Left lung (tissue), 14 donors: ENCODE measurements at regions of chr2 and their contacts with region 1.

Region 1: DNA sequence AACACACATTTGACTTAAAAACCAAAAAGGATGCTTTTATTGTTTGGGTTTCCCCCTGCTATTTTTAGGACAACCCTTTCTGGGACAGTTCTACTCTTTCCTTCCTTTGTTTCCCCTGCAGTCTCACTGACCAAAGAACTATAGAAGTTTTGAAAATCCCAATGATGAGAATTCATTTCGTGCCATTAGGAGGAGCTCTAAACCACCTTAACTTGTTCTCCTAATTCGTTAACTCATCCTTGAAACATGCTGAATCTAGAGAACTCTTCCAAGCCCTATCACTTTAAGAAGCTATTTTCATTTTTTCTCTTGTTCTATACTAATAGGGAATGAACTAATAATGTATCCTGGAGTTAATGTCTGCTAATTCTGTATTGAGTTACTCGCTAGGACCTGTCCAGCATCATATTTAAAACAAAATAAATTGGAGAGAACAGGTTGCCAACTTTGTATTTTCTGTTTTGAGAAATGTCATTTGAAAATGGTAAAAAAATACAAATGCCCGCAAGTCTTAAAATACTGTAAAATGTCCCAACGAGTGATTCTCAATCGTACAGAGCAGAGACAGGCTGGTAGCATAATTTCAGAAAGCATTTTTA is 62.9 kb downstream of the AFTPH start:
- DNase-seq: peak in 1 of 4 donors; percentile 45
- ATAC-seq: peak; percentile 87
- H3K4me3 ChIP-seq: no peak overlapping the region
- H3K27ac ChIP-seq: peak overlapping the region in 1 of 2 donors; percentile 53
- H3K4me1 ChIP-seq: peaks cover 4 to 15% of the 10 kb centered on the region in 2 donors
- H3K27me3 ChIP-seq: no peaks in the 10 kb centered on the region
- CTCF ChIP-seq: peak; percentile 36 to 38

Region 2: DNA sequence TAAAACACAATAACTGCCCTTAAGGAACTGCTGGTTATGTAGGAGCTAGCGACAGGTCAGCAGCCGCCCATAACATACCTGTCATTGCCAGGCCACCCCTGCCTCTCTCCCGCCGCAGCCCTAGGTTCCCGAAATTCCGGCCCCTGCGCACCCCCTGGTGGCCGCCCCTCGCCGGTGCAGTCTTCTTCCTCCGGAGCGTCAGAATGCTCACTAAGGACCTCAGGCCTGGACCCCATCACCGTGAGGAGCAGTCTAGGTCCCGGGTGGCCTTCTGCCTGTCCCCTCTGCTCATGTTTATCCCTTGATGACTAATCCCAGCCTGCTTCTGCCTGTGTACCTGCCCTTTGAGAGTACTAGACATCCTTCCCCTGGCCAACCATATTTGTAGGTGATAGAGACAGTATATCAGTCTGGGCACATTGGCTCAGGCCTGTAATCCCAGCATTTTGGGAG is 286.5 kb after region 1 on chr2:
- intact Hi-C with region 1: loop called in 1 of 2 experiments (anchors 5 kb)
- DNase-seq: peak in 3 of 4 donors; percentile 68 to 98 (median 81)
- ATAC-seq: peak; percentile 94
- H3K4me3 ChIP-seq: no peak overlapping the region
- H3K27ac ChIP-seq: no peak overlapping the region
- H3K4me1 ChIP-seq: peaks cover 8 to 17% of the 10 kb centered on the region in 2 donors
- H3K27me3 ChIP-seq: no peaks in the 10 kb centered on the region
- CTCF ChIP-seq: peak; percentile 94 to 98